GM12878 (cell line): ENCODE measurements at regions of chr11 and their contacts with region 1.

Region 1: GRCh38 chr11:63855975-63856749 is 17.3 kb downstream of the MARK2 start:
- DNase-seq: no peak
- ATAC-seq: peak; percentile 64
- H3K4me3 ChIP-seq: no peak overlapping the region
- H3K27ac ChIP-seq: no peak overlapping the region; the same call in 1 of the 2 replicates
- H3K4me1 ChIP-seq: peaks cover 7% of the 10 kb centered on the region; the same call in 1 of the 2 replicates
- H3K27me3 ChIP-seq: no peaks in the 10 kb centered on the region
- CTCF ChIP-seq: no peak
- EP300 ChIP-seq: no peak
- POLR2A ChIP-seq: no peak
- RAD21 ChIP-seq: no peak

Region 2: GRCh38 chr11:63866211-63866610 is 10.0 kb after region 1 on chr11:
- CTCF ChIA-PET with region 1: interaction called, 5 read pairs
- POLR2A ChIA-PET with region 1: interaction called, 5 read pairs
- RAD21 ChIA-PET with region 1: interaction called, 11 read pairs
- SMC1A ChIA-PET with region 1: interaction called, 19 read pairs
- in situ Hi-C with region 1: no loop called
- intact Hi-C with region 1: no loop called
- DNase-seq: peak; percentile 86
- ATAC-seq: peak; percentile 93
- H3K4me3 ChIP-seq: peak overlapping the region; percentile 12; the same call in 1 of the 2 replicates
- H3K27ac ChIP-seq: peak overlapping the region; percentile 26; the same call in 1 of the 2 replicates
- H3K4me1 ChIP-seq: peaks cover 46% of the 10 kb centered on the region
- H3K27me3 ChIP-seq: no peaks in the 10 kb centered on the region
- CTCF ChIP-seq: no peak
- EP300 ChIP-seq: peak in 1 of 2 experiments; percentile 42; a peak in 1 of 4 replicates
- POLR2A ChIP-seq: no peak
- RAD21 ChIP-seq: peak; percentile 13; the same call in 1 of the 2 replicates